CD4-positive, alpha-beta T cell (primary cell): ENCODE measurements at regions of chr22 and their contacts with region 1.

Region 1: DNA sequence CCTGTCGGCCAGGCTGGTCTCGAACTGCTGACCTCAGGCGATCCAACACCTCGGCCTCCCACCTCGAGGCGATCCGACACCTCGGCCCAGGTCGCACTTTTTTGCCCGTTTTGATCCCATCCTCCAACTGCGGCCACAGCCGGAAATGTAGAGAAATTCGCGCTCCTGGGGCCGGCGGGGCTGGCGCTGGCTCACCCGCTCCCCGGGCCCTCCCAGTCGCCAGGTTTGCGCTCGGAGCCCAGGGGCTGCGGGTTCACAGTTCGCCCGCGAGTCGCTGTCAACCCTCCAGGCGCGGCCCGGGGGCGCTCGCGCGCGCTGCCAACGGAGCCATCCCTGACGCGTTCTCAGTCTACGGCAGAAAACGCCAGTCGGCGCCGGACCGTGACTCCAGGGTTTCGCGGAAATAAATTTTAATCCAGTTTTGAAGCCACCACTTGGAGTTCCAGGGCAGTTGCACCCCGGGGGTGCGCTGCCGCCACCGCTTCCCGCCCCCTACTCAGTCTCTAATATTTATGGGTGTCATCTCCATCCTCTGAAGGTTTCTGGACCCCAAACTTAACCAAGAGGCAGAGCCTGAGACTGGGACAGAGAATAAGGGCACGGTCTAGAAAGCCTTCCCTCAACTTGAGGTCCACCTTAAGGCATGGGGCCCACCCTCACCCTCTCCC is 1.5 kb upstream of the KLHDC7B start:
- DNase-seq: peak; percentile 62 to 91 (median 80)
- ATAC-seq: peak; percentile 48
- H3K4me3 ChIP-seq: peak overlapping the region; percentile 41
- H3K4me3 Mint-ChIP-seq: peak overlapping the region; percentile 74
- H3K27ac ChIP-seq: peak overlapping the region; percentile 27 to 44
- H3K27ac Mint-ChIP-seq: peak overlapping the region; percentile 83
- H3K4me1 ChIP-seq: peaks cover 63% of the 10 kb centered on the region
- H3K4me1 Mint-ChIP-seq: peaks cover 45% of the 10 kb centered on the region
- H3K27me3 ChIP-seq: no peaks in the 10 kb centered on the region
- H3K27me3 Mint-ChIP-seq: no peaks in the 10 kb centered on the region
- CTCF ChIP-seq: peak; percentile 67

Region 2: DNA sequence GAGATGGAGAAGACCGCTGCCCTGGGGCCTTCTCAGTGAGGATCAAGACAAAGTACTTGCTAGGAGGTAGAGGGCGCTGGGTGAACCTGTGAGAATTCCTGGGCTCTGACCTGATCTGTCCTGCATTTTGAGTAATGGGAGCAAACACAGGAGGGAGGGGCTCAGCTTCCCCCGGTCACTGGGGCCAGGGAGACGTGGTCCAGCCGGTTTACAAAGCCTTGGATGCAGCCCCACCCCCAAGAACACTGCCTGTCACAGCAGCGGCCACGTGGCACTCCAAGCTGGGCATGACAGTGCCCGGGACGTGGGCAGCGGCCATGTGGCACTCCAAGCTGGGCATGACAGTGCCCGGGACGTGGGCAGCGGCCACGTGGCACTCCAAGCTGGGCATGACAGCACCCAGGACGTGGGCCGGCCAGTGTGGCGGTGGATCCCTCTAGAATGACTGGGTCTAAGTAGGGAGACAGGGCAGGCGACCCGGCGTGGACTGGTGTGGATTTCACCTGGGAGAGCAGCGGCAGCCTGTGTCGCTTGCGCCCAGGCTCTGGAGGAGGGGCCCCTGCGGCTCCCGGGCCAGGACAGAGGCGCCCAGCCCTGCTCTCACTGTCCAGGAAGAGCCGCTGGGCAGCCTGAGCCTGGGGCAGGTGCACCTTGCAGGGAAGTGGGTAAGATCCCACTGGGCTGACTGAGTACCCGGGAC is 483.6 kb before region 1 on chr22:
- CTCF ChIA-PET with region 1: no interaction called
- POLR2A ChIA-PET with region 1: no interaction called
- intact Hi-C with region 1: no loop called
- DNase-seq: no peak
- ATAC-seq: no peak
- H3K4me3 ChIP-seq: no peak overlapping the region
- H3K4me3 Mint-ChIP-seq: no peak overlapping the region
- H3K27ac ChIP-seq: no peak overlapping the region
- H3K27ac Mint-ChIP-seq: no peak overlapping the region
- H3K4me1 ChIP-seq: no peaks in the 10 kb centered on the region
- H3K4me1 Mint-ChIP-seq: no peaks in the 10 kb centered on the region
- H3K27me3 ChIP-seq: peaks cover 24 to 36% of the 10 kb centered on the region in 2 experiments
- H3K27me3 Mint-ChIP-seq: peaks cover 33% of the 10 kb centered on the region
- CTCF ChIP-seq: no peak

Region 3: DNA sequence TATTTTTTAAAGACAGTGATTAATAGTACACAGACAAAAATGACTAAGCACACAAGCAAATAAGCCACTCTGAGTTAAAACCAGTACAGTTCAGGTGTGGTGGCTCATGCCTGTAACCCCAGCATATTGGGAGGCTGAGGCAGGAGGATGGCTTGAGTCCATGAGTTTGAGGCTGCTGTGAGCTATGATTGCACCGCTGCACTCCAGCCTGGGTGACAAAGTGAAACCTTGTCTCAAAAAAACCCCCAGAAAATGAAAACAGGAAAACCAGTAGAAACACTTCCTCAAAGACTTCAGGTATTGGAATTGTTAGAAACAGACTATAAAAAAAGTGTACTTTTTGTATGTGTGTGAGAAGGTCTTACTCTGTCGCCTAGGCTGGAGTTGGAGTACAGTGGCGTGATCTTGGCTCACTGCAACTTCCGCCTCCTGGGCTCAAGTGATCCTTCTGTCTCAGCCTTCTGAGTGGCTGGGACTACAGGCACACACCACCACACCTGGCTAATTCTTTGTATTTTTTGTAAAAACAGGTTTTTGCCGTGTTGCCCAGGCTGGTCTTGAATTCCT is 168.0 kb before region 1 on chr22:
- CTCF ChIA-PET with region 1: no interaction called
- POLR2A ChIA-PET with region 1: no interaction called
- intact Hi-C with region 1: no loop called
- DNase-seq: no peak
- ATAC-seq: no peak
- H3K4me3 ChIP-seq: no peak overlapping the region
- H3K4me3 Mint-ChIP-seq: no peak overlapping the region
- H3K27ac ChIP-seq: no peak overlapping the region
- H3K27ac Mint-ChIP-seq: no peak overlapping the region
- H3K4me1 ChIP-seq: peaks cover 8% of the 10 kb centered on the region
- H3K4me1 Mint-ChIP-seq: peaks cover 10% of the 10 kb centered on the region
- H3K27me3 ChIP-seq: no peaks in the 10 kb centered on the region
- H3K27me3 Mint-ChIP-seq: no peaks in the 10 kb centered on the region
- CTCF ChIP-seq: no peak

Region 4: GRCh38 chr22:50530877-50531545 is 13.2 kb before region 1 on chr22:
- CTCF ChIA-PET with region 1: interaction called, 66 read pairs
- POLR2A ChIA-PET with region 1: interaction called, 258 read pairs
- intact Hi-C with region 1: loop called in 1 of 2 experiments (anchors 2 kb)
- DNase-seq: peak; percentile 59 to 90 (median 75)
- ATAC-seq: peak; percentile 46
- H3K4me3 ChIP-seq: peak overlapping the region; percentile 80
- H3K4me3 Mint-ChIP-seq: peak overlapping the region; percentile 87
- H3K27ac ChIP-seq: peak overlapping the region; percentile 90 to 98
- H3K27ac Mint-ChIP-seq: peak overlapping the region; percentile 88
- H3K4me1 ChIP-seq: peaks cover 77% of the 10 kb centered on the region
- H3K4me1 Mint-ChIP-seq: peaks cover 45% of the 10 kb centered on the region
- H3K27me3 ChIP-seq: no peaks in the 10 kb centered on the region
- H3K27me3 Mint-ChIP-seq: peaks cover 13% of the 10 kb centered on the region
- CTCF ChIP-seq: no peak

Region 5: DNA sequence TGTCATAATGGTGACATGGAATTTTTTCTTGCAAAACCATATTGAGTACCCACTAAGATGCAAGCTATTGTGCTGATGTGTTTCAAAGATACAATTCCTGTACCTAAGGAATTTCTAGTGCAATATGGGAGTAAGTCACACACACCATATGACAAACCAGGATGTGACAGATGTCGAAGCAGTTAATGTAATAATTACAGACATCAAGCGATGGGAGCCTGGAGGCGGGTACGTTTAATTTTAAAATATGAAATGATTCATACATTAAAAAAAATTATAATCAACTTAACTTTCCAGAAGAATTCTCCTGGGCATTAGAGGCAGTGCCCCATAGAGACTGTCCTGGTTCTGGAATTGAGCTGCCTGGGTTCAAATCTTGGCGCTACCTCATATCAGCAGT is 12.5 kb after region 1 on chr22:
- CTCF ChIA-PET with region 1: interaction called, 3 read pairs
- POLR2A ChIA-PET with region 1: interaction called, 87 read pairs
- intact Hi-C with region 1: no loop called
- DNase-seq: no peak
- ATAC-seq: no peak
- H3K4me3 ChIP-seq: no peak overlapping the region
- H3K4me3 Mint-ChIP-seq: no peak overlapping the region
- H3K27ac ChIP-seq: no peak overlapping the region
- H3K27ac Mint-ChIP-seq: no peak overlapping the region
- H3K4me1 ChIP-seq: no peaks in the 10 kb centered on the region
- H3K4me1 Mint-ChIP-seq: peaks cover 3% of the 10 kb centered on the region
- H3K27me3 ChIP-seq: no peaks in the 10 kb centered on the region
- H3K27me3 Mint-ChIP-seq: no peaks in the 10 kb centered on the region
- CTCF ChIP-seq: no peak

Region 6: DNA sequence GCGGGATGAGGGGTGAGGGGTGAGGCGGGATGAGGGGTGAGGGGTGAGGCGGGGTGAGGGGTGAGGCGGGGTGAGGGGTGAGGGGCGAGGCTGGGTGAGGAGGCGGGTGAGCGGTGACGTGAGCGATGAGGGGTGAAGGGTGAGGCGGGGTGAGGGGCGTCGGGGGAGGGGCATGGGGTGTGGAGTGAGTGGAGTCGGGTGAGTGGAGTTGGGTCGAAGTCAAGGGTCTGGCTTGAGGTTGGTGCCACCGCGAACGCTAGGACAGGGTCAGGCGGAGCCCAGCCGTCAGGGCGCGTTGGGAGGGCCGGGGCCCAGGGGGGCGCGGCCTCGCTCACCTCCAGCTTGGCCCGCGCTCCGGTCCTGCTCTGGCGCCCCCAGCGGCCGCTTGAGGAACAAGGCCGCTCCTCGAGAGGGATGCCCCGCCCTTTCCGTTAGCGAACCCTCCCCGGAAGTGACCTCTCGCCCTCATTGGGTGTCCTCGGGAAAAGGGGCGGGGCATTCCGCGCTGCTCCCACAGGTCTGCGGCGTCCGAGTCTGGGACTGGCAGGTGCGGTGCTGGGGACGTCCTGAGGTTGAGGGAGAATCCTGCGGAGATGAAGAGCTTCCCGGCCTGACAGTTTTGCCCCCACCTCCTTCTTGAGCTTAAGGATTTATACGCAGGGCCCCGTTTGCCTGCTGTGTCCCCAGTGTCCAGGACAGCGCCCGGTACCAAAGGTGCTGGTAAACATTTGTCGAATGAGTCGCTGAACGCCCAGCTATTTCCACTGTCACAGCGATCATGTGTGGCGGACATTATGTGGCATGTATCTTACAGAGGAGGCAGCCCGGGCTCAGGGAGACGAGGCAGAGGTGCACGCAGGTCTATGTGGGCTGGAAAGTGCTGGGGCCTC is 18.6 kb after region 1 on chr22 and contains the start of gene SYCE3:
- CTCF ChIA-PET with region 1: interaction called, 31 read pairs
- POLR2A ChIA-PET with region 1: interaction called, 28 read pairs
- intact Hi-C with region 1: loop called in 1 of 2 experiments (anchors 2 kb)
- DNase-seq: peak; percentile 93 to 99 (median 96)
- ATAC-seq: peak; percentile 94
- H3K4me3 ChIP-seq: peak within 1 kb of the TSS; percentile 84
- H3K4me3 Mint-ChIP-seq: peak within 1 kb of the TSS; percentile 96
- H3K27ac ChIP-seq: no peak within 1 kb of the TSS
- H3K27ac Mint-ChIP-seq: peak within 1 kb of the TSS; percentile 85
- H3K4me1 ChIP-seq: peaks cover 10% of the 10 kb centered on the region
- H3K4me1 Mint-ChIP-seq: peaks cover 16% of the 10 kb centered on the region
- H3K27me3 ChIP-seq: no peaks in the 10 kb centered on the region
- H3K27me3 Mint-ChIP-seq: no peaks in the 10 kb centered on the region
- CTCF ChIP-seq: peak; percentile 84
- total RNA-seq, gene SYCE3: not detected

Region 7: GRCh38 chr22:50582562-50583293 is 38.5 kb after region 1 on chr22 and contains the start of gene CHKB:
- CTCF ChIA-PET with region 1: no interaction called
- POLR2A ChIA-PET with region 1: interaction called, 22 read pairs
- intact Hi-C with region 1: loop called (anchors 2 to 5 kb)
- DNase-seq: peak; percentile 95 to 99 (median 98)
- ATAC-seq: peak; percentile 92
- H3K4me3 ChIP-seq: peak within 1 kb of the TSS; percentile 63
- H3K4me3 Mint-ChIP-seq: peak within 1 kb of the TSS; percentile 100
- H3K27ac ChIP-seq: peak within 1 kb of the TSS; percentile 91 to 95
- H3K27ac Mint-ChIP-seq: peak within 1 kb of the TSS; percentile 98
- H3K4me1 ChIP-seq: peaks cover 31% of the 10 kb centered on the region
- H3K4me1 Mint-ChIP-seq: peaks cover 35% of the 10 kb centered on the region
- H3K27me3 ChIP-seq: no peaks in the 10 kb centered on the region
- H3K27me3 Mint-ChIP-seq: no peaks in the 10 kb centered on the region
- CTCF ChIP-seq: no peak
- total RNA-seq, gene CHKB: 152 to 156 TPM